ENCODE measurements at regions of chr1 and their contacts with region 1.

Region 1: GRCh38 chr1:47437447-47438164 is at the start of gene FOXD2:
- DNase-seq: peak; percentile 80
- H3K4me3 Mint-ChIP-seq: peak within 1 kb of the TSS; percentile 94
- H3K27ac Mint-ChIP-seq: peak within 1 kb of the TSS; percentile 88
- H3K4me1 Mint-ChIP-seq: peaks cover 30% of the 10 kb centered on the region
- H3K27me3 Mint-ChIP-seq: peaks cover 29% of the 10 kb centered on the region
- total RNA-seq, gene FOXD2: 0.17 and 0.21 TPM in 2 replicates

Region 2: GRCh38 chr1:47179017-47179987 is 258.3 kb before region 1 on chr1:
- intact Hi-C with region 1: loop called (anchors 1 kb)
- DNase-seq: peak; percentile 74
- H3K4me3 Mint-ChIP-seq: peak overlapping the region; percentile 87
- H3K27ac Mint-ChIP-seq: peak overlapping the region; percentile 92
- H3K4me1 Mint-ChIP-seq: peaks cover 13% of the 10 kb centered on the region
- H3K27me3 Mint-ChIP-seq: peaks cover 22% of the 10 kb centered on the region

Region 3: DNA sequence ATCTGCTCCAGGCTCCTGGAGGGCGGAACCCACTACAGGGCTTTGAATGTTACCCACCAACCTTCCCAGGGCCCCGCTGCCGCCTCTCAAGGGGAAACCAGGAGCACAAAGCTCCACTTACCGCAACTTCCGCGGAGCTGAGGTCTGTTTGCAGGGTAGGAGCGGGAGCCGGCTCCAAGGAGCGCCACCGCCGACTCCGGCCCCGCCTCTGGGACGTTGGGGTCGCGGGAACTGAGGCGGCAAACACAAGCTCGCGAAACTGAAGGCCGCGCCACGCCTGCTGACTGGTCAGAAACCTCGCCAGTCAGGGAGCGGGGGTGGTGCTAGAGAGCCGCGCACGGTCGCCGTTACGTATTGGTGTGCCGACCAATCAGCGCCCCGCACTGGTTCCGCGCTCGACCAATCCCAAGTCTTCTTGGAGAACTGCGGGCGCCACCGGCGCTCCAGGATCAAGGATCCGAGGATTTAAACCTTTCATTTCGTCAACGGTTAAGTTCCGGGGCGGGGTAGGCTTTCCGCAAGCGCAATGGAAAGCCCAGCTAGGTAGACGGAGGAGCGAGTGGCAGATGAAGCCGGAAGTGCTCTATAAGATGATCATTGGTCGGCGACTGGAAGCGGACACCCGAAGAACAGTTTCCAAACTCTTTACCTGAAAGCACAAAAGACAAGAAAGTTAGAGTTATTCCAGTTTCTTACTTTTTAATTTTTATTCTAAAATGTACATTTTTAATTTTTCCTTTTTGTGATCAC is 123.5 kb before region 1 on chr1 and contains the start of gene STIL:
- intact Hi-C with region 1: loop called (anchors 5 kb)
- DNase-seq: peak; percentile 98
- H3K4me3 Mint-ChIP-seq: peak within 1 kb of the TSS; percentile 94
- H3K27ac Mint-ChIP-seq: peak within 1 kb of the TSS; percentile 85
- H3K4me1 Mint-ChIP-seq: peaks cover 27% of the 10 kb centered on the region
- H3K27me3 Mint-ChIP-seq: peaks cover 3% of the 10 kb centered on the region
- total RNA-seq, gene STIL: 25.8 and 26.3 TPM in 2 replicates

Region 4: DNA sequence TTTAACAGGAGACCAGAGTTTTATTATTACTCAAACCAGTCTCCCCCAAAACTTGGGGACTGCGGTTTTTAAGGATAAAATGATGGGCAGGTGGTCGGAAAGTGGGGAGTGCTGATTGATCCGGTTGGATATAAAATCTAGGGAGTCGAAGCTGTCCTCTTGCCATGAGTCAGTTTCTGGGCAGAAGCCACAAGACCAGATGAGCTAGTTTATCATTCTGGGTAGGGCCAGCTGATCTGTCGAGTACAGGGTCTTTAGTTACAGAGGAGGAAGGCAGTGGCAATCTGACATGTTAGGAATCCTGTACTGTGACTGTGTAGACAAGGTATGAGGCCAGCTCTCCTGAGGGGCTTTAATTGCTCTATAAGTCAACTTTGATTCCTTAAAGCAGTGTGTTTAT is 44.5 kb before region 1 on chr1:
- intact Hi-C with region 1: no loop called
- DNase-seq: no peak
- H3K4me3 Mint-ChIP-seq: no peak overlapping the region
- H3K27ac Mint-ChIP-seq: no peak overlapping the region
- H3K4me1 Mint-ChIP-seq: no peaks in the 10 kb centered on the region
- H3K27me3 Mint-ChIP-seq: peaks cover 33% of the 10 kb centered on the region

Region 5: GRCh38 chr1:47507881-47508701 is 70.5 kb after region 1 on chr1:
- intact Hi-C with region 1: loop called (anchors 5 kb)
- DNase-seq: no peak
- H3K4me3 Mint-ChIP-seq: no peak overlapping the region
- H3K27ac Mint-ChIP-seq: no peak overlapping the region
- H3K4me1 Mint-ChIP-seq: no peaks in the 10 kb centered on the region
- H3K27me3 Mint-ChIP-seq: peaks cover 54% of the 10 kb centered on the region

Region 6: GRCh38 chr1:47710329-47711071 is 272.9 kb after region 1 on chr1:
- intact Hi-C with region 1: loop called (anchors 1 kb)
- DNase-seq: peak; percentile 56
- H3K4me3 Mint-ChIP-seq: no peak overlapping the region
- H3K27ac Mint-ChIP-seq: no peak overlapping the region
- H3K4me1 Mint-ChIP-seq: no peaks in the 10 kb centered on the region
- H3K27me3 Mint-ChIP-seq: peaks cover 59% of the 10 kb centered on the region